ENCODE measurements at regions of chr7 and their contacts with region 1.

Region 1: GRCh38 chr7:100896732-100897608 is 1.3 kb upstream of the ACHE start:
- DNase-seq: no peak
- H3K4me3 ChIP-seq: peak overlapping the region; percentile 42 to 62
- H3K27ac ChIP-seq: no peak overlapping the region
- H3K4me1 ChIP-seq: peaks cover 6 to 14% of the 10 kb centered on the region in 2 donors
- H3K27me3 ChIP-seq: peaks cover 14% of the 10 kb centered on the region
- CTCF ChIP-seq: peak; percentile 68 to 73 (median 69)

Region 2: DNA sequence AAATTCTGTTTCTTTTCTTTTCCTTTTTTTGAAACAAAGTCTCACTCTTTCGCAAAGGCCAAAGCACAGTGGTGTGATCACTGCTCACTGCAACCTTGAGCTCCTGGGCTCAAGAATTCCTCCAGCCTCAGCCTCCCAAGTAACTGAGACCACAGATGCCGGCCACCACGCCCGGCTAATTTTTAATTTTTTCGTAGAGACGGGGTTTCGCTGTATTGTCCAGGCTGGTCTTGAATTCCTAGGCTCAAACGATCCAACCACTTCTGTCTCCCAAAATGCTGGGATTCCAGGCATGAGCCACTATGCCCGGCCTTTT is 162.6 kb after region 1 on chr7:
- intact Hi-C with region 1: loop called (anchors 1 kb)
- DNase-seq: no peak
- H3K4me3 ChIP-seq: no peak overlapping the region
- H3K27ac ChIP-seq: no peak overlapping the region
- H3K4me1 ChIP-seq: no peaks in the 10 kb centered on the region
- H3K27me3 ChIP-seq: no peaks in the 10 kb centered on the region
- CTCF ChIP-seq: no peak

Measured in ascending aorta (tissue), 2 donors.